Activated CD8-positive, alpha-beta T cell treated with anti-CD3 and anti-CD28 coated beads, Interleukin-2, amount 10 ng/mL, durations not matched to agents 7 days and 5 days (primary cell): ENCODE measurements at regions of chrX and their contacts with region 1.

Region 1: GRCh38 chrX:71095543-71095911 is at the start of gene FOXO4:
- DNase-seq: peak; percentile 93
- ATAC-seq: peak; percentile 90
- H3K4me3 Mint-ChIP-seq: peak within 1 kb of the TSS; percentile 87
- H3K27ac Mint-ChIP-seq: peak within 1 kb of the TSS; percentile 86
- H3K4me1 Mint-ChIP-seq: peaks cover 33% of the 10 kb centered on the region
- H3K27me3 Mint-ChIP-seq: no peaks in the 10 kb centered on the region
- total RNA-seq, gene FOXO4: 12.7 to 14.2 TPM

Region 2: GRCh38 chrX:71060127-71060526 is 35.4 kb before region 1 on chrX:
- CTCF ChIA-PET with region 1: no interaction called
- POLR2A ChIA-PET with region 1: no interaction called
- DNase-seq: no peak
- ATAC-seq: no peak
- H3K4me3 Mint-ChIP-seq: no peak overlapping the region
- H3K27ac Mint-ChIP-seq: peak overlapping the region; percentile 78
- H3K4me1 Mint-ChIP-seq: peaks cover 46% of the 10 kb centered on the region
- H3K27me3 Mint-ChIP-seq: no peaks in the 10 kb centered on the region

Region 3: DNA sequence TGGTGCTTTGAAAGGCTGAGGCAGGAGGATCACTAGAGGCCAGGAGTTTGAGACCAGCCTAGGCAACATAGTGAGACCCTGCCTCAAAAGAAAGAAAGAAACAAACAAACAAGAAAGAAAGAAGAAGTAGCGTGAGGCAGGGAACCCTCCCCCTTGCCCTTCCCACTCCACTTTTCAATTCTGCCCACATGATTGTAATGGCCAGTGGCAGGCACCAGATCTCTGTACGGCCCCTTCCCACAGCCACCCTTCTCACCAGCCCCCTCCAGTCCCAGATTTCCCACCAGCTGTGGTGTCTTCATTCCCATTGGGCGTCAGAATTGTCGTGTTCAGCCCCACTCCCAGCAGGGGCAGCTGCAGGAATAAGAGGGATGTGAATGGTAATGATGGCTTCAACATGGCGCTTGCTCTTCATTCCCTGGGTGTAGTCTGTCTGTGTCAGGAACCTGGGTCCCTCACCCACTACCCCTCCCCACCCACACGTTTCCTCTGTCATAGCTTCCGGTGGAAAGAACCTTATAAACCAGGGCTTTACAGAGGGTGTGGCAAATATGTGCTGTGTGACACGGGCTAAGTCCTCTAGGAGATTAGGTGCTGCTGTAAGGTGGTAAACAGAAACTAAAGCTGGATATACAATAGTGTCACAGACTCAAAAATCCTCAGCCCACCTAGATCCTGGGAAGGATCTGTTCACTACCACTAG is 15.8 kb after region 1 on chrX and contains the start of gene IL2RG:
- CTCF ChIA-PET with region 1: interaction called, 28 read pairs
- POLR2A ChIA-PET with region 1: interaction called, 89 read pairs
- DNase-seq: peak; percentile 86
- ATAC-seq: peak; percentile 80
- H3K4me3 Mint-ChIP-seq: peak within 1 kb of the TSS; percentile 94
- H3K27ac Mint-ChIP-seq: peak within 1 kb of the TSS; percentile 98
- H3K4me1 Mint-ChIP-seq: peaks cover 42% of the 10 kb centered on the region
- H3K27me3 Mint-ChIP-seq: no peaks in the 10 kb centered on the region
- total RNA-seq, gene IL2RG: 348 to 351 TPM

Region 4: GRCh38 chrX:71171110-71171801 is 75.7 kb after region 1 on chrX:
- CTCF ChIA-PET with region 1: no interaction called
- POLR2A ChIA-PET with region 1: no interaction called
- DNase-seq: no peak
- ATAC-seq: no peak
- H3K4me3 Mint-ChIP-seq: no peak overlapping the region
- H3K27ac Mint-ChIP-seq: no peak overlapping the region
- H3K4me1 Mint-ChIP-seq: peaks cover 6% of the 10 kb centered on the region
- H3K27me3 Mint-ChIP-seq: no peaks in the 10 kb centered on the region